Activated CD4-positive, alpha-beta memory T cell treated with anti-CD3 and anti-CD28 coated beads for 36 hours (primary cell): ENCODE measurements at regions of chr5 and their contacts with region 1.

Region 1: GRCh38 chr5:40223884-40224402 is 455.8 kb upstream of the PTGER4 start:
- DNase-seq: peak; percentile 67
- H3K4me3 Mint-ChIP-seq: peak overlapping the region; percentile 59
- H3K27ac Mint-ChIP-seq: peak overlapping the region; percentile 95
- H3K4me1 Mint-ChIP-seq: peaks cover 66% of the 10 kb centered on the region
- H3K27me3 Mint-ChIP-seq: no peaks in the 10 kb centered on the region

Region 2: GRCh38 chr5:40021007-40021406 is 202.9 kb before region 1 on chr5:
- CTCF ChIA-PET with region 1: no interaction called
- POLR2A ChIA-PET with region 1: no interaction called
- intact Hi-C with region 1: loop called (anchors 5 kb)
- DNase-seq: no peak
- H3K4me3 Mint-ChIP-seq: no peak overlapping the region
- H3K27ac Mint-ChIP-seq: no peak overlapping the region
- H3K4me1 Mint-ChIP-seq: peaks cover 2% of the 10 kb centered on the region
- H3K27me3 Mint-ChIP-seq: peaks cover 5% of the 10 kb centered on the region

Region 3: DNA sequence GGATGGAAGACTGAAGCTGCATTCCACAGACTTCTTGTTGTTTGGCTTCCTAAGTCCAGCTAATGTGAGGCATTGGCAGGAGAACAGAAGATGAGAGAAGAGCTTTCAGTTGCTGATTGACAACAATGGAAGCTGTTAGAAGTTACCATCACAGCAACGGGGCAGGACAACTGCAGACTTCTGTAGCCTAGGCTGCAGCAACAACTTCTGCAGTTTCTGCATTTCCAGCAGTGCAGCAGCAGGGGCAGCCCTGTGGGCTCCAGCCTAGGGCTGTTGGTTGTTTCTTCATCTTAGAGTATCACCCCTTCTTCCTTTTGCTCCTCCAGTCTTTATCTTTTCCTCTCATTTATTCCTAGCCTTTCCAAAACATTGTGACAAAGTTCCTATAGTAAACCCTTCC is 73.0 kb before region 1 on chr5:
- CTCF ChIA-PET with region 1: no interaction called
- POLR2A ChIA-PET with region 1: no interaction called
- intact Hi-C with region 1: no loop called
- DNase-seq: no peak
- H3K4me3 Mint-ChIP-seq: no peak overlapping the region
- H3K27ac Mint-ChIP-seq: no peak overlapping the region
- H3K4me1 Mint-ChIP-seq: peaks cover 4% of the 10 kb centered on the region
- H3K27me3 Mint-ChIP-seq: no peaks in the 10 kb centered on the region

Region 4: DNA sequence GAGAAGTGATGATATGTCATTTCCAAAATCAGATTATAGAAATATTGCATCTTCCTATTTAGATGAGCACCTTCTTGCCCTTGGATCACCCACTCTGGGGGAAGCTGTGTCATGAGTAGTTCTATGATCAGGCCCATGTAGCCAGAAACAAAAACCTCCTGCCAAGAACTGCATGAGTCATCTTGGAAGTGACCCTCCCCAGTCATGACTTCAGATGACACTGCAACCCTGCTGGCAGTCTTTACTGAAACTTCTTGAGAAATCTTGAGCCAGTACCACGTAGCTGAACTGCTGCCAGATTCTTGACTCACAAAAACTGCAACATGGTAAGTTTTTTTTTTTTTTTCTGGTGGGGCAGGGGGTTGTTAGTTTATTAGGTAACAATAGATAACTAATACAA is 16.2 kb after region 1 on chr5:
- CTCF ChIA-PET with region 1: interaction called, 3 read pairs
- POLR2A ChIA-PET with region 1: interaction called, 13 read pairs
- intact Hi-C with region 1: loop called (anchors 1 kb)
- DNase-seq: peak; percentile 84
- H3K4me3 Mint-ChIP-seq: peak overlapping the region; percentile 21
- H3K27ac Mint-ChIP-seq: peak overlapping the region; percentile 92
- H3K4me1 Mint-ChIP-seq: peaks cover 42% of the 10 kb centered on the region
- H3K27me3 Mint-ChIP-seq: no peaks in the 10 kb centered on the region

Region 5: GRCh38 chr5:40333459-40334244 is 109.7 kb after region 1 on chr5:
- CTCF ChIA-PET with region 1: no interaction called
- POLR2A ChIA-PET with region 1: interaction called, 6 read pairs
- intact Hi-C with region 1: loop called (anchors 1 kb)
- DNase-seq: peak; percentile 56
- H3K4me3 Mint-ChIP-seq: no peak overlapping the region
- H3K27ac Mint-ChIP-seq: peak overlapping the region; percentile 33
- H3K4me1 Mint-ChIP-seq: peaks cover 50% of the 10 kb centered on the region
- H3K27me3 Mint-ChIP-seq: no peaks in the 10 kb centered on the region

Region 6: DNA sequence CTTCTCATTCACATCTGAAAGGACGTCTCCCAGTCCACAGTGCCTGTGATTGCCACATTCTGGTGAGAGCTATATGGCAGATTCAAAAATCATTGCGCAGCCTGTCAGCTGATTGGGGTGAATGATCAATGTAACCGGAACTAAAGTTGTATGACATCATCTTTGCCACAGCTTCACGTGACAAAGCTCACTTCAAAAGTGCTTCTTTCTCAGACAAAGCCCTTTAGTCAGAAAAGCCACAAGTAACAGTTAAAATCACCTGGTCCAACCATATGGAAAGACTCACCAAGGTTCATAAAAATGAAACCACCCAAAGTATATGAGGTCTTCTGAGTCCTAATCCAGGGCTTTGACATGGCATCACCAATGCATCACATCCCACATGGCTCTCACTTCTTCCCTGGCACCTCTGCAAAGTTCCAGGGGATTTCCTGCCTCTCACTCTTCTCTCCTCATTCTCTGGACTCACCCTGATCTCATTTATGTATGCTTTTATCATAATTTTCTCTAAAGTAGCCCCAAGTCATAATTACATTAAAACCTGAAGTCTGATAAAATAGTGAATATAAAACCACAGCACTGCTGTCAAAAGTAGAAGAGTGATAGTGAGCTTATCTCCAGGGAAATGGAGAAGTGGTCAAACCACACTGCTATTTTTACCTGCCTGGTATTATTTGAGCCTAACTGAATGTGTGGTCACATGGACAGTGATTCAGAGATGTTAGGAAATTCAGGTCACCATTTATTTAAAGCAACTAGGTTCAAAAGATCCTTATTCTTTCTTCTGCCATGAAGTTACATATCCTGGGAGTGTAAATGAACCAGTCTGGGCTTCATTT is 262.7 kb after region 1 on chr5:
- CTCF ChIA-PET with region 1: no interaction called
- POLR2A ChIA-PET with region 1: interaction called, 3 read pairs
- intact Hi-C with region 1: loop called (anchors 1 kb)
- DNase-seq: peak; percentile 77
- H3K4me3 Mint-ChIP-seq: peak overlapping the region; percentile 7
- H3K27ac Mint-ChIP-seq: peak overlapping the region; percentile 84
- H3K4me1 Mint-ChIP-seq: peaks cover 81% of the 10 kb centered on the region
- H3K27me3 Mint-ChIP-seq: no peaks in the 10 kb centered on the region

Region 7: DNA sequence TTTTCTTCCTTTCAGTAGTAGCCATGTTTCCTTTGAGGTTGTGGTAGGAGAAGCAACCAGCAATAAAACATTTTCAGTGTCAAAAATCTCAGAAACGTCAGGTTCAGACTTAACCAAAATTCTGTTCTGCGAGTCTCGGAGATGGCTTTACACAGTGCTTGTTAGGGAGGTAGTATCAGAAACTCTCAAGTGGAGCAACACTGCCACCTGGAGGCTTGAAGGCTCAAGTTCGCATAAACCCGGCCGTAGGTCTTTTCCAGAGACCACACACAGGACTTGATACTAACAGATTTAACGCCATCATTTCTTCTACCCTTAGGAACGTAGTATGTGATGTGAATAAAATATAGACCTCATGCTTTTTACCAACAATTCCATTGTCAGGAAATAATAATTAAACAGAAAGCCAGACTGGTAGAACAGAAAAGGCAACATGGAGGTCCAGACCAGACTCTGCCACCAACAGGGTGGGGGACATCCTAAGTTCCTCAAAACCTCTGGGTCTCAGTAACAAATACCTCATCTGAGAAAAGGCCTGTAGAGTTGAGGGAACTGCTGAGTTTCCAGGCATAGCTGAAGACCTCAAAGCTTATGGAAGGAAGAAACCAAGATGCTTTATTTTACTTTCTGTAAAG is 464.3 kb after region 1 on chr5:
- CTCF ChIA-PET with region 1: no interaction called
- POLR2A ChIA-PET with region 1: interaction called, 32 read pairs
- intact Hi-C with region 1: loop called (anchors 1 kb)
- DNase-seq: peak; percentile 91
- H3K4me3 Mint-ChIP-seq: peak overlapping the region; percentile 93
- H3K27ac Mint-ChIP-seq: peak overlapping the region; percentile 97
- H3K4me1 Mint-ChIP-seq: peaks cover 65% of the 10 kb centered on the region
- H3K27me3 Mint-ChIP-seq: no peaks in the 10 kb centered on the region